ENCODE measurements at regions of chr22 and their contacts with region 1.

Region 1: GRCh38 chr22:36481393-36482168 is at the start of gene TXN2:
- DNase-seq: peak; percentile 91
- H3K4me3 Mint-ChIP-seq: peak within 1 kb of the TSS; percentile 97
- H3K27ac Mint-ChIP-seq: peak within 1 kb of the TSS; percentile 92
- H3K4me1 Mint-ChIP-seq: peaks cover 12% of the 10 kb centered on the region
- H3K27me3 Mint-ChIP-seq: peaks cover 1% of the 10 kb centered on the region
- total RNA-seq, gene TXN2: 95.2 and 95.3 TPM in 2 replicates

Region 2: DNA sequence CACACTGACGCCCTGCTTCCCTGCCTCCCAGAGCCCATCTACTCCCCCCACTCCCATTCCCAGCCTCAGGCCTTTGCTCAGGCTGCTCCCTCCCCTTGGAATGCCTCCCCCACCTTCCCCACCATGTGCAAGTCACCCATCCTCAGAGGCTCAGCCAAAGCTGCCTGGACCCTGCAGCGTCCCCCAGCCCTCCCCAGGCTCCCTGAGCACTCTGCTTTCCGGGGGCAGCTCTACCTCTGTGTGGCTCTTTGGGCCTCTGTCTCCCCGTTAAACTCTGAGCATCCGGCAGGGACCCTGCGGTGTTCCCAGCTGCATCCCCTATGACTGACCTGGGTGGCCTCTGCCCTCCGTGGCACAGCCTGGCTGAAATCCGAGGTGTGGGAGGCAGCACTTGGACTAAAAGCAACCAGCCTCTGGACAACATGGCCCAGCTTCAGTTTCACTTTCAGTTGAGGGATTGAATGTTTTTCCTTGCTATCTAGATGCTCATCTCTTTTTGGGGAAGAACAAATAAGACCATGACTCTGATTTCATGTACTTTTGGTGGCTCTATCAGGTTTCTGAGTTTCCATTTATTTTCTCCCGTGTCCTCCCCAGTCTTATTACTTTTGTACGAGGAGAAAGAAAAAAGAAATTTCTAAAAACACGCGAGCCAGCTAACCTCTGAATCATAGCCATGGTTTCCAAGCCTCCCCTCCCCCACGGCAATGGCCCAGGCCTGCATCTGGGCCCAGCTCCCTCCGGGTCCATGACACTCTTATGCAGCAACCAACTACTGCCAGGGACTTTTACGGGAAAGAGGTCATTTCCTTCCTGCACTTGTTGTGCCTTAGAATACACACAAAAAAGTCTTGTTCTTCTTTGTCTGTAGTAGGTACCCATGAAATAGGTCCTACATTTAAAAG is 324.8 kb before region 1 on chr22:
- intact Hi-C with region 1: loop called (anchors 10 kb)
- DNase-seq: peak; percentile 37
- H3K4me3 Mint-ChIP-seq: peak overlapping the region; percentile 95
- H3K27ac Mint-ChIP-seq: peak overlapping the region; percentile 95
- H3K4me1 Mint-ChIP-seq: peaks cover 90% of the 10 kb centered on the region
- H3K27me3 Mint-ChIP-seq: no peaks in the 10 kb centered on the region

Region 3: DNA sequence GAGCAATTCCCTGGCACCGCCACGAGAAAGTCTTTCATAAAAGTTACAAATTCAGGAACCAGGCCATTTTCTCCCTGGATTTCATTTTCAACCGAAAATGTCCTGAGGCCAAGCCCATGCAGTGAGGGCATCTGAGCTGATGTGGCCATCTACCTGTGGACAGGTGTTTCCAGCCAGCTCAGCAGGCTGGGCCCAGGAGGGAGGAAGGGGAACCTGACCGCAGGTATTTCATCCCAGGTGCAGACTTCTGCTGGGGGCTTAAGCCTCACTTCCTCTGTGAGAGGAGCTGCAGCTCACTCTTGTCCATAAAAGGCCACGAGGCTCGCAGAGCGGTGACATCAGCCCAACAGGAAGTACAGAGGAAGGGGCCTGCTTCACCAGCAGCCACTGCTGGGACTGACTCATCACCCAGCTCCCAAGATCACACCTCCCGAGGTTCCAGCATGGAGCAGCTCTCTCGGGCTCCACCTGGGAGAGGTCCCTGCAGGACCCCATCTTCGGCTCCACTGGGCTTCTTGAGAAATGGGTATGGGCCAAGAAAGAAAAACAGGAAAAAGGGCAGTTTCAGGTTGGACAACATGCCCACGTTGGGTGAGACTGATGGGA is 150.2 kb before region 1 on chr22:
- intact Hi-C with region 1: loop called (anchors 1 kb)
- DNase-seq: peak; percentile 77
- H3K4me3 Mint-ChIP-seq: peak overlapping the region; percentile 86
- H3K27ac Mint-ChIP-seq: peak overlapping the region; percentile 98
- H3K4me1 Mint-ChIP-seq: peaks cover 99% of the 10 kb centered on the region
- H3K27me3 Mint-ChIP-seq: no peaks in the 10 kb centered on the region

Region 4: DNA sequence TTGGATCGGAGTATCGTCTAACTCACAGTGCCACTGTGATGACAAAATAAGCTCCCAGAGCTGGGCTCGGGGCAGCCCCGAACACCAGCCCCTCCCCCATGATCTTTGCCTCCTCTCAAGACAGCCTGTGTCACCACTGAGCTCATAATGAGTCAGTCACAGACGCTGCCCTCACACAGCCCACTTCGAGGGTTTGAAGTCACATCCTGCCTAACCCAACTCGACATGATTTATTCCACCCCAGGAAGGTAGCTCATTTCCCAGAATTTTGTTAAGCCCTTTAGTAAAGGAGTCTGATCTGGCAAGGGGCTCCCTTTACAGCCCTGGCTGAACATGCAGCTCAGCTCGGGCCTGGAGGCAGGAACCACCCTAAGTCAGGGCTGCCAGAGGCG is 116.6 kb before region 1 on chr22:
- intact Hi-C with region 1: loop called (anchors 1 kb)
- DNase-seq: peak; percentile 84
- H3K4me3 Mint-ChIP-seq: peak overlapping the region; percentile 71
- H3K27ac Mint-ChIP-seq: peak overlapping the region; percentile 95
- H3K4me1 Mint-ChIP-seq: peaks cover 93% of the 10 kb centered on the region
- H3K27me3 Mint-ChIP-seq: no peaks in the 10 kb centered on the region

Region 5: GRCh38 chr22:36506637-36507517 is 25.3 kb after region 1 on chr22 and contains the start of gene FOXRED2:
- intact Hi-C with region 1: loop called (anchors 1 kb)
- DNase-seq: peak; percentile 92
- H3K4me3 Mint-ChIP-seq: peak within 1 kb of the TSS; percentile 74
- H3K27ac Mint-ChIP-seq: no peak within 1 kb of the TSS
- H3K4me1 Mint-ChIP-seq: peaks cover 19% of the 10 kb centered on the region
- H3K27me3 Mint-ChIP-seq: no peaks in the 10 kb centered on the region
- total RNA-seq, gene FOXRED2: 22.3 and 25.0 TPM in 2 replicates

Region 6: GRCh38 chr22:36528795-36529751 is 47.5 kb after region 1 on chr22 and contains the start of gene EIF3D:
- intact Hi-C with region 1: loop called (anchors 1 kb)
- DNase-seq: peak; percentile 99
- H3K4me3 Mint-ChIP-seq: peak within 1 kb of the TSS; percentile 96
- H3K27ac Mint-ChIP-seq: peak within 1 kb of the TSS; percentile 99
- H3K4me1 Mint-ChIP-seq: peaks cover 24% of the 10 kb centered on the region
- H3K27me3 Mint-ChIP-seq: peaks cover 2% of the 10 kb centered on the region
- total RNA-seq, gene EIF3D: 322 and 323 TPM in 2 replicates

Region 7: GRCh38 chr22:36589856-36590255 is 108.3 kb after region 1 on chr22:
- intact Hi-C with region 1: no loop called
- DNase-seq: no peak
- H3K4me3 Mint-ChIP-seq: no peak overlapping the region
- H3K27ac Mint-ChIP-seq: no peak overlapping the region
- H3K4me1 Mint-ChIP-seq: no peaks in the 10 kb centered on the region
- H3K27me3 Mint-ChIP-seq: peaks cover 12% of the 10 kb centered on the region

Measured in activated T-helper 1 cell treated with anti-CD3 and anti-CD28 coated beads, Interleukin-12 subunit alpha, Interleukin-12 subunit beta, Interleukin-2, Interleukin-4 antibody, amounts not matched to agents 30 ng/mL and 10 ng/mL and 1 ng/mL, durations not matched to agents 14 hours and 24 hours and 36 hours (primary cell).